H1 (cell line): ENCODE measurements at regions of chr5 and their contacts with region 1.

Region 1: GRCh38 chr5:82351754-82352145 is 73.6 kb upstream of the RPS23 start:
- DNase-seq: no peak
- H3K4me3 ChIP-seq: no peak overlapping the region
- H3K27ac ChIP-seq: no peak overlapping the region
- H3K4me1 ChIP-seq: peaks cover 0 to under 1% (median 0%) of the 10 kb centered on the region in 4 experiments; a peak in 1 of 7 replicates
- H3K27me3 ChIP-seq: no peaks in the 10 kb centered on the region
- CTCF ChIP-seq: peak in 2 of 3 experiments; percentile 60 to 74; a peak in 3 of 4 replicates
- EP300 ChIP-seq: no peak
- POLR2A ChIP-seq: no peak
- RAD21 ChIP-seq: peak; percentile 90 to 92

Region 2: GRCh38 chr5:82218374-82219156 is 133.2 kb before region 1 on chr5:
- CTCF ChIA-PET with region 1: no interaction called
- POLR2A ChIA-PET with region 1: no interaction called
- DNase-seq: no peak
- H3K4me3 ChIP-seq: no peak overlapping the region
- H3K27ac ChIP-seq: no peak overlapping the region
- H3K4me1 ChIP-seq: no peaks in the 10 kb centered on the region
- H3K27me3 ChIP-seq: no peaks in the 10 kb centered on the region
- CTCF ChIP-seq: no peak
- EP300 ChIP-seq: no peak
- POLR2A ChIP-seq: no peak
- RAD21 ChIP-seq: no peak

Region 3: DNA sequence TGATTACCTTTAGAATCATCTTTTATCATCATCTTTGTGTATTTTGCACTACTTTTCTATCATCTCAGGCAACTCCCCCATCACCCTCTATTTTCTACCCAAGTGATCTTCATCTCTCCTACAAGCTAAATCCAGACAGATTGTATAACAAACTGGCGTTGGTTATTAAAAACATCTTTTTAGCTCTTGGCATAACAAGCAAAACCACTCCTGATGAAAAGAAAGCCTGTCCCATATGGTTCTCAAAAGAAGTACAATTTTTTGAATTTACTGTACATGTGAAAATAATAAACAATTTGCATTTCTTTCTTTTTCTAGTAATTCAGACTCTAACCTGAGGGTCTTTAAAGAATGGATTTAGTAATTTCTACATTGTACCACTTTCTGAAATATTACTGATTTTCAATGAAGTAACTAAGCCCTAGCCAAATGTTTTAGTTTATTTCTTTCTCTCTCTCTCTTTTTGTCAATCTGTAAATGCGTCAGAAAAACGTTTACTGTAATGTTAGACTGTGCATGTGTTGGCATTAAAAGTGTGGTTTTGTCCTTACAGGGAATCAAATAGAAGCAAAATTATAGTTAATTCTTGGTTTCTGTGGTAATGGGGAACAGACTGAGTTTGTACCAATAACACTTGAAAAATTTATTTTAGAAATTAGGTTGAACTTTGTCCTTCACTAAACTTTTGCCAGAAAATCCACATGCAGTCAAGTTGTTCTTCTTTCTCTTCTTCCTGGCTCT is 21.1 kb before region 1 on chr5:
- CTCF ChIA-PET with region 1: interaction called, 11 read pairs
- POLR2A ChIA-PET with region 1: no interaction called
- DNase-seq: no peak
- H3K4me3 ChIP-seq: no peak overlapping the region
- H3K27ac ChIP-seq: no peak overlapping the region
- H3K4me1 ChIP-seq: no peaks in the 10 kb centered on the region
- H3K27me3 ChIP-seq: peaks cover 0 to 2% (median 0%) of the 10 kb centered on the region in 4 experiments; a peak in 1 of 7 replicates
- CTCF ChIP-seq: no peak
- EP300 ChIP-seq: no peak
- POLR2A ChIP-seq: no peak
- RAD21 ChIP-seq: no peak

Region 4: GRCh38 chr5:82364497-82364896 is 12.7 kb after region 1 on chr5:
- CTCF ChIA-PET with region 1: interaction called, 87 read pairs
- POLR2A ChIA-PET with region 1: no interaction called
- DNase-seq: no peak
- H3K4me3 ChIP-seq: no peak overlapping the region
- H3K27ac ChIP-seq: no peak overlapping the region
- H3K4me1 ChIP-seq: no peaks in the 10 kb centered on the region
- H3K27me3 ChIP-seq: no peaks in the 10 kb centered on the region
- CTCF ChIP-seq: peak in 2 of 3 experiments; percentile 56 to 57; a peak in 3 of 4 replicates
- EP300 ChIP-seq: no peak
- POLR2A ChIP-seq: no peak
- RAD21 ChIP-seq: peak; percentile 86 to 87

Region 5: DNA sequence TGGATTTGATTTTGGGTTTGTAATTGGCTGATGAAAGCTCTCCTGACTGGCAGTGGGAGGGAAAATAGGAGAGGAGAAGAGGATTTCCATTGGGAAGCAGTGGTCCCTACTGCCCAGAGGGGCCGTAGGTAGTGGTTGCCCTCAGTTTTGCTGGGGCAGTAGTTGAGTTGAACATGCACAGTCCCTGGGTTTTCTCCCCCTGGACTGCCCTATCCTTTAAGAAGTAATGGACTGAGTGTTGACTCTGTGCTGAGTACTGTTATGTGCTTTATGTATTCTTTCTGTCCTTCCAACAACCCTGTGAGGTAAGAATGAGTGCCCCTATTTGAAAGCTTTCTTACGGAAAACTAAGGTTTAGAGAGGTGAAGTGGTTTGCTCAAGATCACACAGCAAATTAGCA is 37.6 kb after region 1 on chr5:
- CTCF ChIA-PET with region 1: no interaction called
- POLR2A ChIA-PET with region 1: no interaction called
- DNase-seq: no peak
- H3K4me3 ChIP-seq: no peak overlapping the region
- H3K27ac ChIP-seq: no peak overlapping the region
- H3K4me1 ChIP-seq: no peaks in the 10 kb centered on the region; a peak in 1 of 7 replicates
- H3K27me3 ChIP-seq: no peaks in the 10 kb centered on the region
- CTCF ChIP-seq: no peak
- EP300 ChIP-seq: no peak
- POLR2A ChIP-seq: no peak
- RAD21 ChIP-seq: no peak

Region 6: DNA sequence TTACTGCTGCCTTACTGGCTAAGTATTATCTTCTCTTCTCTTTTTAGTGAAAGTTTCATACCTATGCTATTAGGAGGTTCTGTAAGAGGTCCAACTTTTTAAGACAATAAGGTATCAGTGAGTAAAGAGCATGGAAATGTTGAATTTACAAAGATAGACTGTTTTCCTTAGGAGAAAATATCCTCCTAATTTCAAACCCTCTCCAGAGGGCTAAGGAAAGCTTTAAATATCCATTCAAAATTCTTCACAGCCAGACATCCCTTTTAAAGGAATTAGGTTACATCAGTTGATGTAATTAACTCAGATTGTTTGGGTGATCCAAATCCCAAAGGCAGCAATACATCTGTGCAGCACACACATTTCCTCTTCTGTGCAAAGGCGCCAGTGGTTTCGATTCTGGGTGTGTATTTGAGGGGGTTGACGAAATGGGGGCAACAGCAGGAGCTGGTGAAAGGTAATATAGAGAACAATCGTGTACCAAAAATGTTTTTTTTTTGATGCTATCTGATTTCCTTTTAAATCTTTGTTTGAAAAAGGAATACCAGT is 200.2 kb after region 1 on chr5:
- CTCF ChIA-PET with region 1: no interaction called
- POLR2A ChIA-PET with region 1: no interaction called
- DNase-seq: no peak
- H3K4me3 ChIP-seq: no peak overlapping the region
- H3K27ac ChIP-seq: no peak overlapping the region
- H3K4me1 ChIP-seq: no peaks in the 10 kb centered on the region
- H3K27me3 ChIP-seq: no peaks in the 10 kb centered on the region
- CTCF ChIP-seq: no peak
- EP300 ChIP-seq: no peak
- POLR2A ChIP-seq: no peak
- RAD21 ChIP-seq: no peak

Region 7: DNA sequence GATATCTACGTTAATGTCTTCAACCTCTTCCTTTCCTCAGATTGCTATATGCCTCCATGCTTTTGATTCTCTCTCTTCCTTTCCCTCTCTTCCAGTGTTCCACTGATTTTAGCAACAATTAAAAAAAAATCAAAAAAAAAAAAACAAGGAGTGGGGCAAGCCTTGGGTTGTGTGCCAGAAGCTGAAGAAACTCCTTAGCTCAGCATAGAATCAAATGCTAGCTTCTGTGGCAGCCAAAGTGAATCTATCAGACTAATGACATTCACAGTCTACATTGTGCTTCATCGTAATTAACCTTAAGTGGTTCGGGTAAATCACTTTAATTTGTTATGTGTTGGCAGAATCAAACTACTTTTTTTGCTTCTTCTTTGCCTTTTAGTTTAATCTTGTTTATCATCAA is 488.1 kb after region 1 on chr5:
- CTCF ChIA-PET with region 1: no interaction called
- POLR2A ChIA-PET with region 1: no interaction called
- DNase-seq: no peak
- H3K4me3 ChIP-seq: no peak overlapping the region
- H3K27ac ChIP-seq: no peak overlapping the region
- H3K4me1 ChIP-seq: no peaks in the 10 kb centered on the region
- H3K27me3 ChIP-seq: no peaks in the 10 kb centered on the region
- CTCF ChIP-seq: no peak
- EP300 ChIP-seq: no peak
- POLR2A ChIP-seq: no peak
- RAD21 ChIP-seq: no peak